ENCODE measurements at regions of chr14 and their contacts with region 1.

Region 1: DNA sequence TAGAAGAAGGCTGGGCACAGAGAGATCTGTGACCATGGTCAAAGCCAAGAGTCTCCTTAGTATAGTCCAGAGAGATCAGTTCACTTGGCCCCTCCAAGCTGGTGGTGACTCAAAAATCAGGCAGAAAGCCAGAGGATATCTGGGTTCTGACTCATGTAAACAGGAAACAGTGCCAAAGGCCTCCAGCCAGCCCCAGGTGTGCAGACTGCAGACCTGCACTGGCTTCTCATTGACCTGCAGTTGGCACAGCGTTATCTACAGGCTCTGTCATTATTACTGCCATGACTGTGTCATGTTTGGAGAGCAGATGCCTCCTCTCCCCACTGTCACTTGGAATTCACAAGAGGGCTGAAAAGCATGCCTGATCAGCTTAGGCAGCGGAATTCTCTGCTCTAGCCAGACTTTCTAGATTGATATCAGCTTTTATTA is 295.8 kb upstream of the PRKD1 start:
- DNase-seq: no peak
- H3K4me3 ChIP-seq: no peak overlapping the region
- H3K27ac ChIP-seq: no peak overlapping the region
- H3K4me1 ChIP-seq: peaks cover 6% of the 10 kb centered on the region
- H3K27me3 ChIP-seq: peaks cover 45% of the 10 kb centered on the region
- CTCF ChIP-seq: no peak

Region 2: GRCh38 chr14:29982993-29983392 is 240.4 kb before region 1 on chr14:
- CTCF ChIA-PET with region 1: no interaction called
- POLR2A ChIA-PET with region 1: no interaction called
- intact Hi-C with region 1: no loop called
- DNase-seq: no peak
- H3K4me3 ChIP-seq: no peak overlapping the region
- H3K27ac ChIP-seq: no peak overlapping the region
- H3K4me1 ChIP-seq: no peaks in the 10 kb centered on the region
- H3K27me3 ChIP-seq: no peaks in the 10 kb centered on the region
- CTCF ChIP-seq: no peak

Region 3: DNA sequence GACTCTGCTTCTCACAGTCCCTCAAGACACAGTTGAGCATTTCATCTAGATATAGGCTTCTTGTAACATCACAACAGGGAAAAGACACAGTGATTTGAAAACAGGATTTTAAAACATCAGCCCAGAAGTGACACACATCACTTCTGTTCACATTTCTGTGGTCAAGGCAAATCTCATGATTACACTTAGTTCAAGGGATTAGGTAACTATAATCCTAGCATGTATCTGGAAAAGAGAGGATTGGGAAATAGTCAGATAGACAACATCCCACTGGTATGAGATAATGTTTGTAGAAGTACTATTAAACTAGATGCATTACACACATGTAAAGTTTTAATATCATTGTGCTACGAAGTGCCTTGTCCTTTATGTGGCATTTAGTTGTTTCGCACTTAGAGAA is 43.2 kb before region 1 on chr14:
- CTCF ChIA-PET with region 1: no interaction called
- POLR2A ChIA-PET with region 1: no interaction called
- intact Hi-C with region 1: no loop called
- DNase-seq: no peak
- H3K4me3 ChIP-seq: no peak overlapping the region
- H3K27ac ChIP-seq: no peak overlapping the region
- H3K4me1 ChIP-seq: no peaks in the 10 kb centered on the region
- H3K27me3 ChIP-seq: no peaks in the 10 kb centered on the region
- CTCF ChIP-seq: no peak

Region 4: GRCh38 chr14:30443368-30444007 is 220.1 kb after region 1 on chr14:
- CTCF ChIA-PET with region 1: no interaction called
- POLR2A ChIA-PET with region 1: no interaction called
- intact Hi-C with region 1: loop called (anchors 10 kb)
- DNase-seq: peak; percentile 59
- H3K4me3 ChIP-seq: no peak overlapping the region
- H3K27ac ChIP-seq: no peak overlapping the region
- H3K4me1 ChIP-seq: no peaks in the 10 kb centered on the region
- H3K27me3 ChIP-seq: peaks cover 39% of the 10 kb centered on the region
- CTCF ChIP-seq: peak; percentile 69

Region 5: GRCh38 chr14:30610787-30611343 is 387.5 kb after region 1 on chr14:
- CTCF ChIA-PET with region 1: no interaction called
- POLR2A ChIA-PET with region 1: no interaction called
- intact Hi-C with region 1: loop called (anchors 10 kb)
- DNase-seq: peak; percentile 72
- H3K4me3 ChIP-seq: no peak overlapping the region
- H3K27ac ChIP-seq: no peak overlapping the region
- H3K4me1 ChIP-seq: no peaks in the 10 kb centered on the region
- H3K27me3 ChIP-seq: no peaks in the 10 kb centered on the region
- CTCF ChIP-seq: peak; percentile 52